ENCODE measurements at regions of chr11 and their contacts with region 1.

Region 1: DNA sequence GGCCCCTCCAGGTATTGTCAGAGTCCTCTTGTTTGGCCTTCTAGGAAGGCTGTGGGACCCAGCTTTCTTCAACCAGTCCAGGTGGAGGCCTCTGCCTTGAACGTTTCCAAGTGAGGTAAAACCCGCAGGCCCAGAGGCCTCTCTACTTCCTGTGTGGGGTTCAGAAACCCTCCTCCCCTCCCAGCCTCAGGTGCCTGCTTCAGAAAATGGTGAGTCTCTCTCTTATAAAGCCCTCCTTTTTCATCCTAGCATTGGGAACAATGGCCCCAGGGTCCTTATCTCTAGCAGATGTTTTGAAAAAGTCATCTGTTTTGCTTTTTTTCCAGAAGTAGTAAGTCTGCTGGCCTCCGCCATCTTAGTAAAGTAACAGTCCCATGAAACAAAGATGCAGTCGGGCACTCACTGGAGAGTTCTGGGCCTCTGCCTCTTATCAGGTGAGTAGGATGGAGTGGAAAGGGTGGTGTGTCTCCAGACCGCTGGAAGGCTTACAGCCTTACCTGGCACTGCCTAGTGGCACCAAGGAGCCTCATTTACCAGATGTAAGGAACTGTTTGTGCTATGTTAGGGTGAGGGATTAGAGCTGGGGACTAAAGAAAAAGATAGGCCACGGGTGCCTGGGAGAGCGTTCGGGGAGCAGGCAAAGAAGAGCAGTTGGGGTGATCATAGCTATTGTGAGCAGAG is at the start of gene CD3E:
- DNase-seq: peak; percentile 91
- H3K4me3 Mint-ChIP-seq: peak within 1 kb of the TSS; percentile 97
- H3K27ac Mint-ChIP-seq: peak within 1 kb of the TSS; percentile 99
- H3K4me1 Mint-ChIP-seq: peaks cover 50% of the 10 kb centered on the region
- H3K27me3 Mint-ChIP-seq: no peaks in the 10 kb centered on the region
- total RNA-seq, gene CD3E: 571 TPM in 2 replicates

Region 2: GRCh38 chr11:118198370-118198769 is 106.3 kb before region 1 on chr11:
- intact Hi-C with region 1: loop called (anchors 2 kb)
- DNase-seq: peak; percentile 94
- H3K4me3 Mint-ChIP-seq: peak overlapping the region; percentile 62
- H3K27ac Mint-ChIP-seq: peak overlapping the region; percentile 82
- H3K4me1 Mint-ChIP-seq: peaks cover 21% of the 10 kb centered on the region
- H3K27me3 Mint-ChIP-seq: no peaks in the 10 kb centered on the region

Region 3: DNA sequence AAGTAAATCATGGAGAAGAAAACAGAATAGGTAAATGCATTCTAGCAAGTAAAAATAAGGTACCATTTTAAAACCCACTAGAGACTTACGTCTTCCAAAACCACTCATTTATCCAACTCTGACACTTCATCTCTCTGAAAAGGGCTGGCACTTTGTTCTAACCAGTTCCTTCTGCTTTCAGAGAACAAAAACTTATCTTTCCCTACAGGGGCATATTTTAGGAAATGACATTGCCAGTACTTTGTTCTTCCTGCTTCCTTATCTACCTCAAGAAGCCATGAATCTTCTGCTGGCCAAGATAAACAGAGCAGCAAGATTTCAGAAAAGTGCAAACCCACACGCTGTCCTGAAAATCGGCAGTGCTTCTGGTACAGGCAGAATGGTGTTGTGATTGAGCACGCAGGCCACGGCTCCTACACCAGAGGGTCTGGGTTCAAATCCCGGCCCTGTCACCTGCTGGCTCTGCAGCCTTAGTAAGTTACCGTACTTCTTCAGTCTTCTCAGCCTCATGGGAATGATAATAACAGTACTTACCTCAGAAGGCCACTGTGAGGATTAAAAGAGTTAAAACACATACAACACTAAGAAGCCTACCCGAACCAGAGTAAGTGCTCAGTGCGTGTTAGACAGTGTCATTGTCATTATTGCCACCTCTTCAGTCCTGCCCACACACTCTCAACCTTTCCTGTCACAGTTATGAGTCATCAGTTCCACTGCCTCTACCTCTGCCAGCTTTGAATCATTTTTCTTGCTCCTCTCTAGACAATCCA is 63.5 kb before region 1 on chr11:
- intact Hi-C with region 1: loop called (anchors 1 kb)
- DNase-seq: peak; percentile 90
- H3K4me3 Mint-ChIP-seq: peak overlapping the region; percentile 87
- H3K27ac Mint-ChIP-seq: peak overlapping the region; percentile 98
- H3K4me1 Mint-ChIP-seq: peaks cover 74% of the 10 kb centered on the region
- H3K27me3 Mint-ChIP-seq: peaks cover 2% of the 10 kb centered on the region

Region 4: GRCh38 chr11:118353084-118353710 is 48.5 kb after region 1 on chr11:
- intact Hi-C with region 1: loop called (anchors 2 kb)
- DNase-seq: no peak
- H3K4me3 Mint-ChIP-seq: no peak overlapping the region
- H3K27ac Mint-ChIP-seq: peak overlapping the region; percentile 29
- H3K4me1 Mint-ChIP-seq: peaks cover 13% of the 10 kb centered on the region
- H3K27me3 Mint-ChIP-seq: no peaks in the 10 kb centered on the region

Region 5: DNA sequence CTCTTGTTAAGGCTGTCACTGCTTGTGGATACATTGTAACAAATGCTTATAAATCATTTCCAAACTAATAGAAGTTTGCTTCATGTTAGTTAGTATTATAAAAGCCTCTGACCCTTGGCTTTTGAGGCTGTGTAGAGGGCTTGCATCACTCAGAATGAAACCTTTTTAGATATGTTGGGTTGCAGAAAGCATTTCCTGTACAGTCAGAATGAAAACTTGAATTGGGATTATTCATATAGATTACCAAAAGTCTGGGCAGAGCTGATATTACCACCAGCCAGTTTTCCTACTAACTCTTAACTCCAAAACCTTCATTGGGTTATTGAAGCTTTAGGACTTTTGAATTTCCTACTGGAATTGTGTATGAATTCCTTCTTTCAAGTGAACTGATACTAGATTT is 143.6 kb after region 1 on chr11:
- intact Hi-C with region 1: loop called (anchors 2 kb)
- DNase-seq: peak; percentile 74
- H3K4me3 Mint-ChIP-seq: peak overlapping the region; percentile 44
- H3K27ac Mint-ChIP-seq: peak overlapping the region; percentile 35
- H3K4me1 Mint-ChIP-seq: peaks cover 57% of the 10 kb centered on the region
- H3K27me3 Mint-ChIP-seq: no peaks in the 10 kb centered on the region